ENCODE measurements at regions of chrX and their contacts with region 1.

Region 1: GRCh38 chrX:21756785-21757529 is 959 bp downstream of the SMPX start:
- DNase-seq: no peak
- H3K4me3 ChIP-seq: no peak overlapping the region
- H3K27ac ChIP-seq: no peak overlapping the region
- H3K4me1 ChIP-seq: no peaks in the 10 kb centered on the region
- CTCF ChIP-seq: no peak

Region 2: DNA sequence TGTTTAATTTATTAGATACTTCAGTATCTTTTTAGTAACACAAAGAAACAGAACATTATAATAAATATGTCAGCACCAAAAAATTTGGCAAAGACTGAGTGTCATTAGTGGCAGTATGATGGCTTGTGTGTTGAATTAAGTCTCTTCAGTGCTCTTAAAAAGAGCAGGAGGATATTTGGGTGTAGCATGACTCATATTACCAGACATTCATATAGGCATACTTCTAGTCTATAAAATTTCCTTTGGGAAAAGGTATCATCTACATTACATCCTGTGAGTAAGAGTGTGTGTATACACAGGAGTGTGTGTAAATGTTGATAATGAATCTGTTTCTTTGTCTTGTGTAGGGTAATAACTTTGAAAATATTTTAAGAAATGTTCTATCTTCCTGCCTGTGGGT is 247.0 kb before region 1 on chrX:
- CTCF ChIA-PET with region 1: no interaction called
- POLR2A ChIA-PET with region 1: no interaction called
- intact Hi-C with region 1: no loop called
- DNase-seq: no peak
- H3K4me3 ChIP-seq: no peak overlapping the region
- H3K27ac ChIP-seq: no peak overlapping the region
- H3K4me1 ChIP-seq: no peaks in the 10 kb centered on the region
- CTCF ChIP-seq: no peak

Region 3: GRCh38 chrX:21658152-21658737 is 98.7 kb before region 1 on chrX and contains the start of gene KLHL34:
- CTCF ChIA-PET with region 1: no interaction called
- POLR2A ChIA-PET with region 1: interaction called, 13 read pairs
- intact Hi-C with region 1: no loop called
- DNase-seq: no peak
- H3K4me3 ChIP-seq: no peak within 1 kb of the TSS
- H3K27ac ChIP-seq: no peak within 1 kb of the TSS
- H3K4me1 ChIP-seq: no peaks in the 10 kb centered on the region
- CTCF ChIP-seq: no peak
- total RNA-seq, gene KLHL34: not detected in 2 replicates

Measured in OCI-LY7 (cell line).